GM10248 (cell line): ENCODE measurements at regions of chr10 and their contacts with region 1.

Region 1: DNA sequence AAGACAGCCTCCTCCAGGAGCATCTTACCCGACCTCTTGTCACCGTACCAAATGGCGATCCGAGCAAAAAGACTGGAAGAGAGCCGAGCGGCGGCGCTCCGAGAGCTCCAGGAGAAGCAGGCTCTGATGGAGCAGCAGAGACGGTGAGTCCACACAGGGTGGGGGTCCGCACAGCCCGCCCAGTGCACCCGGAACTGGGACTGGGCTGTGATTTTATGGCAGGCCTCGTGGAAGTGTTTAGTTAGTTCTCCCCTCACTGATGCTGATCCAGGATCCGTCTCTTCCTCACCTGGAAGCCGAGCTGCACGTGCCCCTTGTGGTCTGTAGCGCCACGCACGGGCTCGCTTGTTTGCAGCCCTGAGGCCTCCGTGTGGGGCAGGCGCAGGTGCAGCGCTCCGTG is 19.6 kb downstream of the LRRC27 start:
- DNase-seq: no peak
- CTCF ChIP-seq: no peak

Region 2: GRCh38 chr10:132336919-132337407 is 14.6 kb before region 1 on chr10:
- CTCF ChIA-PET with region 1: interaction called, 15 read pairs
- POLR2A ChIA-PET with region 1: no interaction called
- DNase-seq: no peak
- CTCF ChIP-seq: no peak

Region 3: DNA sequence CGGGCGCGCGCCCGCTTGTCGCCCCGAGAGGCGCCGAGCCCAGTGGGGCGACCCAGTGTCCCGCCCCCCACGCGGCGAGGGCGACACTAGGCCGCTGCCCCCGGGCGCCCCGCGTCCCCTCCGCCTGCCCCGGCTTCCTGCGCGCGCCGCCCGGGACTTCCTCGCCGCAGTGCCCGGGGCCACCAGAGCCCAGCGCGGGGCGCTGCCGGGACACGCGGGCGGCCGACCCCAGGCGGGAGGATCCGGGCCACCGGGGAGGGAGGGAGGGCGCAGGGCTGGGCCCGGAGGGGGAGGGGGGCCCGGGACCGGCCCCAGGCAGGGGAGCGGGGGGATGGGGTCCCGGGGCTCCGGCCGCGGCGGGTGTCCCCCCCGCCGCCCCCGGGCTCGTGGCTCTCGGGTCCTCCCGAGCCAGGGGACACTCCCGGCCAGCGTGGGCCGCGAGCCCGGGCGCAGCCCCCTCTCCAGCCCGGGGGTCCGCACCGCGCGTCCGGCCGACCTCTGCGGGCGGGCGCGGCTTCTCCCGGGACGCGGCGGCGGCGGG is 45.0 kb after region 1 on chr10:
- CTCF ChIA-PET with region 1: no interaction called
- POLR2A ChIA-PET with region 1: no interaction called
- DNase-seq: peak; percentile 66
- CTCF ChIP-seq: peak; percentile 29

Region 4: DNA sequence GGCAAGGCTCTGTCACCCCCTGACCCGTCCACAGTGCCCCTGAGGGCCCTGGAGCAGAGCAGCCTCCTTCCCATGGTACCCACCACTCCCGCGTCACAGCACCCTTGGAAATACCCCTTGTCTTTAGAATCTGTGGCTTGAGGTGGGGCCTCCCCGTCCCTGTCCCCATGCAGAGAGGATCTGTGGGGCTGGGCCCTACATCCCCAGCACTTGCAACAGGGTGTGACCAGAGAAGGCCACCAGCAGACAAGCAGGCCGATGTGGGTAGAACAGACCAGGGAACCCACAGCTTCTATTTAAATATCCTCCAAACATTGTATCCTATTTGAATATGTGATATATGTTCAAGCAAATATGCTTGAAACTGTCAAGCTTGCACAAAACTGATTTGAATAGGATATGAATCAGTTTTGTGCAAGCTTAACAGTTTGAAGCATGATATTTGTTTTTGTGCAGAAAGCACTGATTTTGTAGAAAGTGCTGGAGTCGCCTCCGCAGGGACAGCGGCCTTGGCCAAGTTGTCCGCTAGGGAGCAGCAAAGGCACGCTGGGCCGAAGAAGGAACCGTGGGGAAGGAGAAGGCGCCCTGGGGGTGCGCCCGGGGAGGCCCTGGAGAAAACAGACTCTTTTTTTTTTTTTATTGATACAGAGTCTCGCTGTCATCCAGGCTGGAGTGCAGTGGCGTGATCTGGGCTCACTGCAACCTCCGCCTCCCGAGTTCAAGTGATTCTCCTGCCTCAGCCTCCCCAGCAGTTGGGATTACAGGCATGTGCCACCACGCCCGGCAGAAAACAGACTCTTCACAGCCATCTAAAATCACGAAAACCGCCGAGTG is 588.6 kb after region 1 on chr10:
- CTCF ChIA-PET with region 1: no interaction called
- POLR2A ChIA-PET with region 1: no interaction called
- DNase-seq: peak; percentile 68
- CTCF ChIP-seq: peak; percentile 97

Region 5: DNA sequence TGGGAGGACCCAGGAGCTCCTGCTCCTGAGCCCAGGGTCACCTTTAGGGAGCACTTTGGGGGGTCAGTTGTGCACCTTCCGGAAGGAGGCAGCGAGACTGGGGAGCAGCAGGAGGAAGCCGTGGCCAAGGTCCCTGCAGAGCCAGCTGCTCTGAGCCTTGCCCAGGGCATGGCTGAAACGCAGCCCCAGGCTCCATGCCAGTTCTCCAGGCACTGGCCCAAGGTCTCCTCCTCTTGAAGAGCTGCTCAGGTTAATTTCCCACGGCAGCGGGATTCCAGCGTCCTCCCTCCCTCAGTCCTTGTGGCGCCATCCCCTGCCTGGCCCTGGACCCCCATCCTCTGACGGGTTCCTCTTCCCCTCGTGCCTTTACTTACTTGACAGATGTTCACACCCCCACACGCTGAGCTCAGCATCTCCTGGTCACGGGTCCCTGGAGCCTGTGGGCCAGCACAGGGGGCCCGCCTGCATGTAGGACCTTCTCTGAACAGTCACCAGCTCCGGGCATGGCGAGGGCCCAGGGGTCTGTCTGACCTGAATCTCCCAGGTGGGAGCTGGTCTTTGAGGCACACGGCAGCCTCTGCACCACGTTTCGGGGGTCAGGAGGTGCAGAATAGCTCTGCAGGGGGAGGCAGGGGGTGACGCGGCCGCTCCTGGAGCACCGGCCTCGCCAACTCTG is 607.4 kb after region 1 on chr10:
- CTCF ChIA-PET with region 1: no interaction called
- POLR2A ChIA-PET with region 1: no interaction called
- DNase-seq: no peak
- CTCF ChIP-seq: no peak